Posterior cingulate gyrus (tissue), 11 donors: ENCODE measurements at regions of chr6 and their contacts with region 1.

Region 1: DNA sequence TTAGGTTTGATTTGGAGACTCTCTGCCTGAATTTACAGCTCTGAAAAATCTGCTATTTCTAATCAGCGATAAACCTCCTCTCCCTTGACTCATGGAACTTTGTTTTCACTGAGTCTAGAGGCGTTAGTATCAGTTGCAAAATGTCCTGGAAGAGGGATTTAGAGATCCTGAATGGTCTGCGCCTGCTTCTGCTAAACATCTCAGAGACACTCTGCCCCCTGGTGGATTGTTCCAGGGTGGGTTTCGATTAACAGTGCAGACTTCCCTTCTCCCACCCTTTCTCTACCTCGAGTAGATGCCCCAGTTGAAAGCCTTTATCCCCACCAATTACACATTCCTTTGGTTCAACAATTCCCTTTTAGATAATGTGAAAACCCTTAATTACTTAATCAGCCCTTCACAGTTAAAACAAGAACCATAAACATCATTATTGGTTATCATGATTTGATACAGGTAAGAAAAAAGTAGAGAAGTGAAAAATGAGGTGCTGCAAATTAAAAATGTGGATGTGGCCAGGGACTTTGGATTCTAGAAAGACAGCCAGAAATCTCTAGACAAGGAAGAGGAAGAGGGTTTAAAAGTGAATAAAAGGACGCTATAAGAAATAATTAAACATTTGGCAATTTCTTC is 5.5 kb downstream of the HTR1B start:
- DNase-seq: peak in 7 of 10 donors; percentile 54 to 88 (median 71)

Region 2: GRCh38 chr6:75893058-75893775 is 1564.6 kb before region 1 on chr6:
- intact Hi-C with region 1: loop called (anchors 5 kb)
- DNase-seq: no peak

Region 3: DNA sequence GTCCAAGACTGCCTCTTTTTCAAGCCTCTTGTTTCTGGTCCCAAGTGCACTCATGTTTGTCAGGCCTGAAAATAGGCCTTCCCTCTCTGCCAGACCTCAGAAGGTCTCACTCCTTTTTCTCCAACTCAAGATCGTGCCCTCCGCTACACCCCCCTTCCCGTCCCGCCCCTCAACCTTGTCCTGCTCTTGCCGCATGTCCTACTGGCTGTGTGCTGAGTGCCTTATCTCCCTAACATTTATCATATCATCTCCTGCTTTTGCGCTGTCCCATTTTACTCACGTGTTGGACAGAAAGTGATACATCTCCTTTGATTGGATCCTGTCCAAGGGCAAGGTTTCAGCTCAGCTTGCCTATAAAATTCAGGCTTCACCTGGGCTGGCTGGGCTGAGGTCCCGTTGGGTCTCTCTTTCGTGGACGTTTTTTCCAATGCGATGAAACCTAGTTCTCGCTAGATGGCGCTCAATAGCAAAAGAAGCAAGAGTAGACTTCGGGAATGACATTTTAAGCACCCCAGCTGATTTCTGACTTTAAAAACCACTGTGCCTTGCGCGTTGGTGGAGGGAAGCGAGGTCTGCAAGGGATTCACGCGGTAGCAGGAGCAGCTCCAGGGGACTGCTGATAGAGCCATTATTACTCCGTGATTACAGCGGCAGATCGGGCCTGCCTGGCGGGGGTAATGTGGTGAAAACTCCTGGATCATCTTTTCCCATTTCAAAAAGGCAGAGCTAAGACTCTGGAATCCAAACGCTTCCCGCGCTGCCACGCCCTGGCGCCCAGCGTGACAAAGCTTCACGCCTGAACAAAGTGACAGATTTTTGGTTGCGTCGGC is 1523.0 kb before region 1 on chr6:
- intact Hi-C with region 1: loop called (anchors 2 kb)
- DNase-seq: peak in 7 of 10 donors; percentile 13 to 85 (median 43)

Region 4: DNA sequence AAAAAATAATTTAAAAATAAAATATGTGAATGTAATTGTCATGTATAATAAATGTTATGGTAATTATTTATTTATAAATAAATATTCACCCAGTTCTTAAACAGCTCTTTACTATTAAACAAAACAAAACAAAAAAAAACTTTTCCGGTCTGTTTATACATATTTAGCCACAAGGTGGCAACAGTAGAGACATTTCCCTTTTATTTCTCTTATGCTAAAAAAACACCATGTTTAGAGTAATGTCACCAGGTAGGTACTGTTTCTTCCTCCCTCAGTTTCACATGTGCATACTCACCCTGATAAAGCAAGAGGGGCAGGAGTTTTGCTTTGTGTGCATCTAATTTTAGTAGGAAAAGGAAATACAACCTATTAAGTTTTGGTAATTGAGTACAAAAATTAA is 775.0 kb before region 1 on chr6:
- intact Hi-C with region 1: loop called (anchors 5 kb)
- DNase-seq: no peak